Sigmoid colon (tissue), 7 donors: ENCODE measurements at regions of chr6 and their contacts with region 1.

Region 1: GRCh38 chr6:119349323-119350042 is at the start of gene MAN1A1:
- DNase-seq: peak; percentile 96
- H3K4me3 ChIP-seq: peak within 1 kb of the TSS; percentile 84 to 98 (median 92)
- H3K27ac ChIP-seq: peak within 1 kb of the TSS; percentile 94 to 99 (median 98)
- H3K4me1 ChIP-seq: peaks cover 0 to 61% (median 39%) of the 10 kb centered on the region in 4 donors
- H3K27me3 ChIP-seq: no peaks in the 10 kb centered on the region
- CTCF ChIP-seq: no peak
- EP300 ChIP-seq: no peak
- POLR2A ChIP-seq: peak; percentile 69 to 87
- total RNA-seq, gene MAN1A1: 81.9 to 143 (median 107) TPM

Region 2: GRCh38 chr6:118893807-118894424 is 455.6 kb before region 1 on chr6 and contains the start of gene ASF1A:
- intact Hi-C with region 1: loop called (anchors 5 kb)
- DNase-seq: peak; percentile 98
- H3K4me3 ChIP-seq: peak within 1 kb of the TSS; percentile 68 to 96 (median 82)
- H3K27ac ChIP-seq: peak within 1 kb of the TSS; percentile 93 to 98 (median 96)
- H3K4me1 ChIP-seq: peaks cover 0 to 38% (median 17%) of the 10 kb centered on the region in 4 donors
- H3K27me3 ChIP-seq: no peaks in the 10 kb centered on the region
- CTCF ChIP-seq: peak in 3 of 4 experiments; percentile 22 to 46 (median 33)
- EP300 ChIP-seq: no peak
- POLR2A ChIP-seq: peak; percentile 60 to 63
- total RNA-seq, gene ASF1A: 10.2 to 17.1 (median 14.1) TPM

Region 3: DNA sequence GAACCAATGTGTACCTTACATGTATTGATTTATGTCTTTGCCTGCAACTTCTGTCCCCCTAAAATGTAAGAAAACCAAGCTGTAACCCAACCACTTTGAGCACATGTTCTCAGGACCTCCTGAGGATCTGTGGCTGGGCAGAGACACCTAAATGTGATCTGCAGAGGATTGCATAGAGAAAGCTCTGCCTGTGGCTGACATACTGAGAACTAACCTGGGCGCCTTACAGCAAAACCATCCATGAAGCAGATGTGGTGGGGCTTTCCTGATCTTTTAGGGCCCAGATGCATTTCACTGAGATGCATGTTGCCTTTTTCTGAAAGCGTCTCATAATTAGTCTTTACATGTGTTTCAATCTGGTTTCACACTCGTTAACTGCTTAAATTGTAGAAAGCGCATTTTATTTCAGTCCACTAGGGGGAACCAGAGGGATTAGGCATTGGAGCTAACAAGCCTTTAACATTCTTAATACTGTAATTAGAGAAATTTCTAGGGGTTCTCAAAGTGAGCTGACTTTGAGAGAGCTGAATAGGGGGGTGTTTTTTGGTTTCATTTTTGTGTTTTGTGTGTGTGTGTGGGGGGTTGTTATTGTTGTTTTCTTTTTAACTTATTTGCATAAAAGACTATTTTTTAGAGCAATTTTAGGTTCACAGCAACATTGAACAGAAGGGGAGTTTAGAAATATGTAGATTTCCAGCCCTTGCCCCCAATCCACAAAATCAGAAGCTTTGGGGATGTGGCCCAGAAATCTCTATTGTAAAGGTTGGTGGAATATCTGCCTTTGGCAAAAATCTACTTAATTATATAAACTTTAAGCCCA is 220.1 kb before region 1 on chr6:
- intact Hi-C with region 1: loop called (anchors 5 kb)
- DNase-seq: no peak
- H3K4me3 ChIP-seq: no peak overlapping the region
- H3K27ac ChIP-seq: no peak overlapping the region
- H3K4me1 ChIP-seq: peaks cover 0 to 14% (median 12%) of the 10 kb centered on the region in 4 donors
- H3K27me3 ChIP-seq: no peaks in the 10 kb centered on the region
- CTCF ChIP-seq: peak; percentile 22 to 88 (median 71)
- EP300 ChIP-seq: no peak
- POLR2A ChIP-seq: no peak

Region 4: DNA sequence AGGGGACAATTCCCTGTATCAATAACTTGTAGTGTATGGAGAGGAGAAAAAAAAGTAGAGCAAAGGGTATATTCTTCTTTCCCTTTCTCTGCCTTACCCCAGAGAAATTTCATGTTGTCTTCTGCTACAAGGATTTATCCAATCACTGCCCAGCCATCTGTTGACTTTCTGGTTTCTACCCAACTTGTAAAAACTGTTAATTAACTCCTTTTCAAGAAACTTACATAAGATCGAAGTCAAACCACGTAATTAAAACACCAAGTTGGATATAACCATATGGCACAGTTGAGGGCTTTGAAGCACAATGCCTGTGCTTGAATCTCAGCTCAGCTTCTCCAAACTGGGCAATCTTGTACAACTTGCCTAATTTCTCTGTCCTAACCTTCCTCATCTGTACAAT is 99.4 kb before region 1 on chr6:
- intact Hi-C with region 1: no loop called
- DNase-seq: no peak
- H3K4me3 ChIP-seq: no peak overlapping the region
- H3K27ac ChIP-seq: no peak overlapping the region
- H3K4me1 ChIP-seq: no peaks in the 10 kb centered on the region
- H3K27me3 ChIP-seq: no peaks in the 10 kb centered on the region
- CTCF ChIP-seq: no peak
- EP300 ChIP-seq: no peak
- POLR2A ChIP-seq: no peak

Region 5: DNA sequence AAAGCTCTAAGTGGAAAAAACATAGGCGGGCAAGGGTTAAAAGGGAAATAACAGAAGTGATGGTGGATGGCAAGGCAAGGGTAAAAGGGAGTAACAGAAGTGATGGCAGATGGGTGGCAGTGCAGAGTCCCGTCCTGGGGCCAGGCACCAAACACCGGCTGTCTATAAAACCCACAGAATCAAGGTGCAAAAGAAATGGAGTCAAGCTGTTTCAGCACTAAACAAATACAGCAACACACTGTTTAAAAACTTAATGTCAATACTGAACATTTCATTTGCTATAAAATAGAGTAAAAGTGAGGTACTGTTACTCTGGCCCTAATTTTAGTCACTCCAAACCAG is 87.6 kb before region 1 on chr6:
- intact Hi-C with region 1: no loop called
- DNase-seq: no peak
- H3K4me3 ChIP-seq: no peak overlapping the region
- H3K27ac ChIP-seq: no peak overlapping the region
- H3K4me1 ChIP-seq: peaks cover 0 to 24% (median 3%) of the 10 kb centered on the region in 4 donors
- H3K27me3 ChIP-seq: no peaks in the 10 kb centered on the region
- CTCF ChIP-seq: no peak
- EP300 ChIP-seq: no peak
- POLR2A ChIP-seq: no peak

Region 6: GRCh38 chr6:119541132-119541905 is 191.8 kb after region 1 on chr6:
- intact Hi-C with region 1: loop called (anchors 5 kb)
- DNase-seq: no peak
- H3K4me3 ChIP-seq: no peak overlapping the region
- H3K27ac ChIP-seq: peak overlapping the region; percentile 59 to 79 (median 74)
- H3K4me1 ChIP-seq: peaks cover 0 to 44% (median 32%) of the 10 kb centered on the region in 4 donors
- H3K27me3 ChIP-seq: no peaks in the 10 kb centered on the region
- CTCF ChIP-seq: no peak
- EP300 ChIP-seq: peak; percentile 67 to 95 (median 90)
- POLR2A ChIP-seq: no peak

Region 7: DNA sequence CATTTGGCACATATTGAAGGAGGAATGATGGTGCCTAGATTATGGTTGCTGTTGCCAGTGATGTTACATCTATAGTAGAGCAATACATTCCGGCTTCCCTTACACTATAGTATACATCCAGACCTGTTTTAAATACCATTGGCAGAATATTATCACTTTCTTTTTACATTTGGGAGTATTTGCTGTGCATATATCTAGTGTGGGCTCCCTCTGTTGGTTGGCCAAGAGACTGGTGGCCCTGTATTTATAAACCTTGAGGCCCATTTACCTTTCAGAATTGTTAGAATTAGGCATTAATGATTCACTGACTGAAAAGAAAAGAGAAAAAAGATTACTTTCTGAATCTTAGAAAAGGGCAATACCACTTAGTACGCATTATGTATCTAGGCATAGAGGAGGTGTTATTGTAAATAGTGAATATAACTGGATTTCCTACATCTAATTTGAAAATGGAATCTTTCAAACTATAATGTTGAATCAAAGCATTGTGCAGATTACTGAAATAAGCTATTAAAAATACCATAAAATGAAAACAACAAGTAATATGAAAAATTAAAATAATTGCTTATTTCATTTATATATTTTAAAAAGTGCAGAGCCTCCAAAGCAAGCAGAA is 628.9 kb after region 1 on chr6:
- intact Hi-C with region 1: loop called (anchors 5 kb)
- DNase-seq: no peak
- H3K4me3 ChIP-seq: no peak overlapping the region
- H3K27ac ChIP-seq: no peak overlapping the region
- H3K4me1 ChIP-seq: peaks cover 0 to 19% (median 4%) of the 10 kb centered on the region in 4 donors
- H3K27me3 ChIP-seq: no peaks in the 10 kb centered on the region
- CTCF ChIP-seq: peak in 3 of 4 experiments; percentile 23 to 51 (median 31)
- EP300 ChIP-seq: no peak
- POLR2A ChIP-seq: no peak